ENCODE measurements at regions of chr15 and their contacts with region 1.

Region 1: DNA sequence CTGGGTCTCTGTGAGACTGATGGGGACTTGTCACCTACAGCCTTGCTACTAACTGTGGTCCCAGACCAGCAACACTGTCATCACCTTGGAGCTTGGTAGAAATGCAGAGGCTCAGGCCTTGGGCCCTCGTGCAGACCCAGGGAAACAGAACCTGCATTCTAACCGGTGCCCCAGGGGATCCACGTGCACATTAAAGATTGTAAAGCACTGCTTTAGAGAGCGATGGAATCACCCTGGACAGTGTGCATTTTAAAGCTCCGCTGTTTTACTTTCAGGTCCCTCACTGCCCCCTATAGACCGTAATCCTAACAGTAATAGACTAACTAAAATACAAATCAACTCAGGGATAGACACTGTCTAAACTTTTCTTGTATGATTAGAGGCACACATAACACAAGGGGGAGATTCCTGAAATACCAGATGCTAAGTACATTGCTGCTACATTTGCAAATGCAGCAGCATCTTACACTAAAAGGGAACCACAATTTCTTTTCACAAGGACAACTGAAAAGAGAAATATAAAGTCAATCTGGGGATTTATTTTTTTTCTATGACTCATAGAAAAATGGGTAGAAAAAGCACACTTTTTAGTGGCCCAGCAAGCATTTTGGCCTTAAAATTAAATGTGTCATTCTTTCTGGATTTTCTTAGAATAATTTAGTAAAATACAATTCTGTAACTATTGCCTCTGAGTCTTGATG is 10.5 kb upstream of the SH3GL3 start:
- DNase-seq: peak; percentile 18 to 55 (median 34)
- ATAC-seq: peak; percentile 92
- H3K4me3 ChIP-seq: no peak overlapping the region
- H3K27ac ChIP-seq: no peak overlapping the region
- H3K4me1 ChIP-seq: no peaks in the 10 kb centered on the region
- H3K27me3 ChIP-seq: peaks cover 0 to 2% of the 10 kb centered on the region in 2 experiments; a peak in 2 of 5 replicates
- CTCF ChIP-seq: peak; percentile 54 to 68 (median 67)
- EP300 ChIP-seq: no peak
- POLR2A ChIP-seq: no peak
- RAD21 ChIP-seq: peak; percentile 50 to 75

Region 2: DNA sequence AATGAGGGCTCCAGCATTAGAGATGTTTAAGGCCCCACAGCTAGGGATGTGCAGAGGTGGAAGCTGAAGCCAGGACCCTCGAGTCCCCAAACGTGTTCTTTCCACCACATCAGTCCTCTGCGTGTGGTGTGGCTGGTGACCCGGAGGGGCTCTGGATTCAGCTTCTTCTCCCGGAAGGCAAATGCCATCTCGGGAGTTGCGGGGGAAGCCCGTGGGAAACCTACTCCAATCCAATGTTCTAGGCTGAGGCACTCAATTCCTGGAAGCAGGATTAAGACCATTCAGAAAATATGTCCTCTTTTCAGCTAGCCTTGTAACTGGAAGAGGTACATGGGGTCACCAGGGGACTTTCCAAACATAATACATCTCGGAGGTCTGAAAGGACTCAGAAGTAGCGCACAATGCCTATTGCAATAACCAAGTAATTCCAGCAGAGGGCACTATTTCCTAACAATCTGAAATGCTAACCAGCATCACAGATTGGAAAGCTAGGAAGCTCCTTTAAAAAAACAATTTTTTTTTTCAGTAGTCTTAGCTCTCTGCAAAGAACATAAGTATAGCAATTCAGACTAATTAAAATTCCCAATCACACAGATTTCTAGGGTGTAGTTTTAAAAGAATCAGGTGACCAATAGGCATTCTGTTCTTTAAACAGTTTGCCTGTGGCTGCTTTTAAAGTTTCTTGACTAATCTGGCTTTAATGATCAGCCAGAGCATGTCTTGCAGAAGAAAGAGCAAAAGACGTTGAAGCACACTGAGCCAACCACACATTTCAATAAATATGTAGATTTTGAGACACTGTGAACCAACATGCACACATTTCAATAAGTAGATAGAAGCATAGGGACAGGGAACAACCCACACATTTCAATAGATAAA is 188.2 kb before region 1 on chr15:
- CTCF ChIA-PET with region 1: interaction called, 12 read pairs
- POLR2A ChIA-PET with region 1: no interaction called
- in situ Hi-C with region 1: no loop called
- intact Hi-C with region 1: loop called (anchors 1 kb)
- DNase-seq: peak; percentile 26 to 69 (median 44)
- ATAC-seq: peak; percentile 85
- H3K4me3 ChIP-seq: no peak overlapping the region
- H3K27ac ChIP-seq: no peak overlapping the region
- H3K4me1 ChIP-seq: no peaks in the 10 kb centered on the region
- H3K27me3 ChIP-seq: peaks cover 3 to 17% of the 10 kb centered on the region in 2 experiments; a peak in 3 of 5 replicates
- CTCF ChIP-seq: peak; percentile 71 to 91 (median 85)
- EP300 ChIP-seq: no peak
- POLR2A ChIP-seq: no peak
- RAD21 ChIP-seq: peak; percentile 84 to 94

Region 3: DNA sequence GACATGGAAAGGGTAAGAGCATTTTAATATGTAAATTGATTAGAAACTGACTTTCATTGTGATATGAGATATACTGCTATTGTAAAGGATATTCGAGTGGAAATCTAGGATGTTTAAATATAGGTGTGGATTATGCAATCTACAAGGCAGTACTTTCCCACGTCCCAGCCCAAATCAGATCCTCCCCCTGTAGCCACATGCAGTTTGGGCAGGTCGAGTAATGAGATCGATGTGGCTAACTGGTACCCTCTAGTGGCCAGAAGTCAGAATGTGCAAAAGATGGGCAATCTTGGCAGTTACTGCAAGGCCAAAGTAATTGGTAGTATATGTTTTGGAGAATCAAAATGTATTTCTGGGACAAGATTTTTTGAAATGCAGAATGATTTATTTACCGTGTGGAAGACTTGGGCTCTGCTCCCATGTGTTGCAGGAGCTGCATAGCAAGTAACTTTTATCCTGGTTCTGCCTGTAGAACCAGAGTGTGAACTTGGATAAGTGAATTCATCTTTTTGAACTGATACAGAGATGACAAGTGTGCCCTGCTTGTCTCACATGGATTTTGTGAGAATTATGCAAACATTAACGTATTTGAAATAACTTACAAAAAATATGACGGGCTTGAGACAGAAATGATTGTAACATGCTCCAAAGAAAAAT is 122.8 kb after region 1 on chr15:
- CTCF ChIA-PET with region 1: interaction called, 54 read pairs
- POLR2A ChIA-PET with region 1: interaction called, 3 read pairs
- in situ Hi-C with region 1: loop called (anchors 5 kb)
- intact Hi-C with region 1: loop called (anchors 1 kb)
- DNase-seq: peak; percentile 75 to 80 (median 76)
- ATAC-seq: peak; percentile 97
- H3K4me3 ChIP-seq: no peak overlapping the region
- H3K27ac ChIP-seq: no peak overlapping the region
- H3K4me1 ChIP-seq: peaks cover 2 to 4% of the 10 kb centered on the region in 2 experiments; a peak in 3 of 5 replicates
- H3K27me3 ChIP-seq: no peaks in the 10 kb centered on the region
- CTCF ChIP-seq: peak; percentile 85 to 90 (median 88)
- EP300 ChIP-seq: no peak
- POLR2A ChIP-seq: no peak
- RAD21 ChIP-seq: peak; percentile 85 to 95

Region 4: DNA sequence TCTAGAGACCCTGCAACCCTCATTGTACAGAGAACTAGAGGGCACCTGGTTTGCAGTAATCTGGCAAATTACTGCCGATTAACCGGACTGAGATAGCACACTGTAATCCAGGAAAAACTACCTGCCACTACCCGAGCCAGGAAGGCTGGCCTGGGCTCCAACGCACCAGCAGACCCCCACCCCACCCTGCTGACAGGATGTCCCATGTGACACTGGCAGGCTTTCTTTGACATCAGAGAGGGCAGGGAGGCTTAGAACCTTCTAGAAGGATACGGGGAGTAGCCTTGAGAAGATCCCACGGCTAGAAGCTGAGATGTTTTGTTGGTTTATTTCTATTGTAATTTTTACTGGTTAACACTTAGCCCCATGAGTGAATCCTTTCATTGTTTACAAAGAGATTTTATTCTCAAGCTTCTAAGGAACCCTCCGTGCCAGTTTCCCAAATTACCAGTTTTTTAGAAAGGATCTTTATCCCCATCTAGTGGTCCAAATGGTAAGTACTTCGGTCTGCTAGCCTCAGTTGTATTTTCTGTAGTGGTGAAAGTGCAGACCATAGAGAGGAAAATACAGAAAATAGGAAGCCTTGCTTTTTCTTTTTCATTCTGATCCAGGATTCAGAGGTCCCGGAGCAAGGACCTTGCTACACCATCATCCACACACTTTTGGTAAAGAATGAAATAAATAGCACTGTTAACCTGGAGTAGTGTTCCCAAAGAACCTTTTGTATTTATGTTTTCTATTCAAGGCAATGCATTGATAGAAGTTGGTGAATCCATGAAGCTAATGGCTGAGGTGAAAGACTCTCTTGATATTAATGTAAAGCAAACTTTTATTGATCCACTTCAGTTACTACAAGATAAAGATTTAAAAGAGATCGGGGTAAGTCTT is 135.5 kb after region 1 on chr15:
- CTCF ChIA-PET with region 1: interaction called, 29 read pairs
- POLR2A ChIA-PET with region 1: interaction called, 3 read pairs
- in situ Hi-C with region 1: no loop called
- intact Hi-C with region 1: no loop called
- DNase-seq: peak in 2 of 4 experiments; percentile 26 to 47
- ATAC-seq: peak; percentile 67
- H3K4me3 ChIP-seq: no peak overlapping the region
- H3K27ac ChIP-seq: no peak overlapping the region
- H3K4me1 ChIP-seq: no peaks in the 10 kb centered on the region
- H3K27me3 ChIP-seq: no peaks in the 10 kb centered on the region
- CTCF ChIP-seq: peak; percentile 27 to 67 (median 55); a peak in 5 of 6 replicates
- EP300 ChIP-seq: no peak
- POLR2A ChIP-seq: no peak
- RAD21 ChIP-seq: peak; percentile 52 to 62

Region 5: DNA sequence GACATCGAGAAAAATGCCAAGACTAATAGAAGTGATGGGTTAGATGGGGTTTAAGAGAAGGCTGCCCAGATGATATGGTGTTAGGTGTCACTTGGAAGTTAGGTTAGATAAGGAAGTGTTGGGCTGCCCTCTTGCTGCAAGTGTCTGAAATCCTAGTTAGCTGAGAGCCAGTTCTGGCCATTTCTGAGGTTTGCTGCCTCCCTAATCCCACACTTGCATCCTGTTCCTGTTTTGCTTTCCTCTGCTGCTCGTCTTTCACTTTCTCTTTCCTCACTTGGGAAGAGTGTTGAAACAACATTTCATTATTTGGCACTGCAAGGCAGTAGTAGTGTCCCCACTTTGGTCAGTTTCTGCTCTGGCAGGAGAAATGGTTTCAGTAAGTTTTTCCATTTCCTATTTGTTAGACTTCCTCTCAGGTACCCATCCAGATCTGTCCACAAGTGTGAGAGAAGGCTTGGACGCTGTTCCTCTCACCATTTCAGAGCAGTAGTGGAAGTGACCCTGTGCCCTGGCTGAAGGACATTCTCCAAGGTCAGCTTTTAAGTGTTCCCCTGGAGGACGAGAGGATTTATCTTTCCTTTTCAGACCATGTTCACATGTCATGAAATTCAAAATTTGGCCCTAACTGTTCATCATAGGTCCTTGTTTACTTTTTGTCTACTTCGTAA is 310.6 kb after region 1 on chr15:
- CTCF ChIA-PET with region 1: interaction called, 3 read pairs
- POLR2A ChIA-PET with region 1: no interaction called
- in situ Hi-C with region 1: no loop called
- intact Hi-C with region 1: loop called (anchors 10 kb)
- DNase-seq: peak in 1 of 4 experiments; percentile 1
- ATAC-seq: 0 out of 3 replicates have a peak, but pooled peaks have one; percentile 38
- H3K4me3 ChIP-seq: no peak overlapping the region
- H3K27ac ChIP-seq: no peak overlapping the region
- H3K4me1 ChIP-seq: no peaks in the 10 kb centered on the region
- H3K27me3 ChIP-seq: no peaks in the 10 kb centered on the region
- CTCF ChIP-seq: peak in 1 of 3 experiments; percentile 32; a peak in 2 of 6 replicates
- EP300 ChIP-seq: no peak
- POLR2A ChIP-seq: no peak
- RAD21 ChIP-seq: peak in 1 of 2 experiments; percentile 44; a peak in 2 of 4 replicates

Region 6: DNA sequence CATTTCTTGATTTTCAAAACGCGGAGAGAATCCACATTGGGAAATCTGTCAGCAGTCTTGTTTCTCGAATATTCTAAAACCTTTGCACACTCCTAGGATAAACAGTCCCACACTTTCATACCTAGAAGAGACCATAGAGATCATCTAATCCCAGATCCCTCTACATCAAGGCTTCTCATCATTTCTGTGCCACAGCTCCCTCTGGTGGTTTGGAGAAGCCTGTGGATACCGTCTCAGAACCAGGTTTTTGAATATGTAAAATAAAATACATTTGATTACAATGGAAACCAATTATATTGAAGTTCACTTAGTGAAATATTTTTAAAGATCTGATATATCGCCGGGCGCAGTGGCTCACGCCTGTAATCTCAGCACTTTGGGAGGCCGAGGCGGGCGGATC is 587.0 kb after region 1 on chr15:
- CTCF ChIA-PET with region 1: no interaction called
- POLR2A ChIA-PET with region 1: no interaction called
- in situ Hi-C with region 1: loop called (anchors 10 kb)
- intact Hi-C with region 1: loop called (anchors 10 kb)
- DNase-seq: peak; percentile 48 to 62 (median 60)
- ATAC-seq: peak; percentile 87
- H3K4me3 ChIP-seq: no peak overlapping the region
- H3K27ac ChIP-seq: no peak overlapping the region
- H3K4me1 ChIP-seq: no peaks in the 10 kb centered on the region
- H3K27me3 ChIP-seq: no peaks in the 10 kb centered on the region
- CTCF ChIP-seq: peak; percentile 57 to 68 (median 64)
- EP300 ChIP-seq: no peak
- POLR2A ChIP-seq: no peak
- RAD21 ChIP-seq: peak in 1 of 2 experiments; percentile 58; a peak in 2 of 4 replicates